ENCODE measurements at regions of chr5 and their contacts with region 1.

Region 1: GRCh38 chr5:42514754-42515153 is 91.5 kb downstream of the GHR start:
- DNase-seq: peak in 1 of 2 experiments; percentile 19
- H3K4me3 ChIP-seq: no peak overlapping the region
- H3K4me3 Mint-ChIP-seq: no peak overlapping the region
- H3K27ac Mint-ChIP-seq: no peak overlapping the region
- H3K4me1 ChIP-seq: peaks cover 20% of the 10 kb centered on the region; the same call in 1 of the 2 replicates
- H3K4me1 Mint-ChIP-seq: peaks cover 8% of the 10 kb centered on the region
- H3K27me3 ChIP-seq: no peaks in the 10 kb centered on the region
- H3K27me3 Mint-ChIP-seq: no peaks in the 10 kb centered on the region
- CTCF ChIP-seq: peak; percentile 16 to 33

Region 2: DNA sequence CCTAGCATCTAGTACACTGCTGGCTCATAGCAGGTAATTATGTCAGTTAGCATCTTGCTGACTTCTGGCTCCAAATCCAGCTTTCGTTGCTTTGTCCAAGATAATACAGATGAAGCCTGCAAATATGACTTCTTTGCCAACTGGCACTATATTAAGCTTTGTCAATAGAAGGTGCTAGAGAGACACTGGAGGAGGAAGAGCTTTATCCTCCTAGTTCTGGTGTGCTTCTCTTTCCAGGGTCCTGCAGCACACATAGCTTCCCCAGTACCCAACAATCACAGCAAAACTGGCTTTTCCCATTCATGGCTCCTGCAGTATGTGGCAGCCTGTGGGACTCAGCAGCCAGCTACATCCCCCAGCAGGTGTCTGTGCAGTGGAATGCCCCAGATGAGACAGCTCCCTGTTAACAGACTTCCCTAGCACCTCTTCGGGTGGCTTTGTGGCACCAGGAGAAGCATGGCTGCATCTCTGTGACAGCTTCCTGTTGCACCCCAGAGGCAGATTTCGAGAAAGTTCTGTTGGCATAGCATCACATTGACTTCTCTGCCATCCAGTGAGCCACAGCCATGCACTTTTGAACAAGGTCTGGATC is 792.3 kb before region 1 on chr5:
- CTCF ChIA-PET with region 1: no interaction called
- POLR2A ChIA-PET with region 1: no interaction called
- intact Hi-C with region 1: no loop called
- DNase-seq: no peak
- H3K4me3 ChIP-seq: no peak overlapping the region
- H3K4me3 Mint-ChIP-seq: no peak overlapping the region
- H3K27ac Mint-ChIP-seq: no peak overlapping the region
- H3K4me1 ChIP-seq: no peaks in the 10 kb centered on the region
- H3K4me1 Mint-ChIP-seq: no peaks in the 10 kb centered on the region
- H3K27me3 ChIP-seq: no peaks in the 10 kb centered on the region
- H3K27me3 Mint-ChIP-seq: no peaks in the 10 kb centered on the region
- CTCF ChIP-seq: no peak

Region 3: DNA sequence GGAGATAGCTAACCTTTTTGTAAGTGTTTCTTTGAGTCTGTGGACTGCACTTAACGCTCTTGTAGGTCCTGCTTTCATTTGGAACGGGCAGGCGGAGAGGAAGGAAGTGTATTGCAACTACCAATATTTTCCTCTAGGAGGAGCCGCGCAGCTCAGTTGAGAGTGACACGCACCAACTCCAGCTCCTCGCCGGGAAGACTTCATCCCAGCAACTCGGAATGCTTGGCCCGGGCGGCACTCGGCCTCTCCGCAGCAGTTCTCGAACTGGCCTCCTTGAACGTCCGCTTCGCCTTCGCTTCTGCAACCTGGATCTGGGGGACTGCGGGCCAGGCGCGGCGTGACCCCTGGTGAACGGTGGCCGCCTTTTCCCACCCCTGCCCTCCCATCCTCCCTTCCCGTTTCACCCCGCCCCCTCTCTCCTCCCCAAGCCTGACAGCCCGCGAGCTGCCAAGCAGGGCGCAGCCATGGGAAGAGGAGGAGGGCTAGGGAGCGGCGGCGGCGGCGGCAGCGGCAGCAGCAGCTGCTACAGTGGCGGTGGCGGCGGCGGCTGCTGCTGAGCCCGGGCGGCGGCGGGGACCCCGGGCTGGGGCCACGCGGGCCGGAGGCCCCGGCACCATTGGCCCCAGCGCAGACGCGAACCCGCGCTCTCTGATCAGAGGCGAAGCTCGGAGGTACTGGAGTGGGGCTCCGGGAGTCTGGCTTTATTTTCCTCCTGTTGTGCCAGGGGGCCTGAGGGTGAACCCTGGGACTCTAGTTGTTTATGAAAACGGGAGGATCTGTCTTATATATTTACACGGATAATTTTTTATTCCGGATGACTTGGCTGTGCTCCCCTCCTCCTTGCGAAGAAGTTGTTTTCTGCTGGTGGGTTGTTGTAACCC is 91.2 kb before region 1 on chr5 and contains the start of gene GHR:
- CTCF ChIA-PET with region 1: interaction called, 3 read pairs
- POLR2A ChIA-PET with region 1: no interaction called
- intact Hi-C with region 1: loop called (anchors 5 kb)
- DNase-seq: peak; percentile 83 to 84
- H3K4me3 ChIP-seq: peak within 1 kb of the TSS; percentile 63
- H3K4me3 Mint-ChIP-seq: no peak within 1 kb of the TSS
- H3K27ac Mint-ChIP-seq: no peak within 1 kb of the TSS
- H3K4me1 ChIP-seq: no peaks in the 10 kb centered on the region
- H3K4me1 Mint-ChIP-seq: no peaks in the 10 kb centered on the region
- H3K27me3 ChIP-seq: no peaks in the 10 kb centered on the region
- H3K27me3 Mint-ChIP-seq: no peaks in the 10 kb centered on the region
- CTCF ChIP-seq: peak; percentile 73 to 74
- total RNA-seq, gene GHR: 0.54 and 1.2 TPM in 2 replicates

Region 4: DNA sequence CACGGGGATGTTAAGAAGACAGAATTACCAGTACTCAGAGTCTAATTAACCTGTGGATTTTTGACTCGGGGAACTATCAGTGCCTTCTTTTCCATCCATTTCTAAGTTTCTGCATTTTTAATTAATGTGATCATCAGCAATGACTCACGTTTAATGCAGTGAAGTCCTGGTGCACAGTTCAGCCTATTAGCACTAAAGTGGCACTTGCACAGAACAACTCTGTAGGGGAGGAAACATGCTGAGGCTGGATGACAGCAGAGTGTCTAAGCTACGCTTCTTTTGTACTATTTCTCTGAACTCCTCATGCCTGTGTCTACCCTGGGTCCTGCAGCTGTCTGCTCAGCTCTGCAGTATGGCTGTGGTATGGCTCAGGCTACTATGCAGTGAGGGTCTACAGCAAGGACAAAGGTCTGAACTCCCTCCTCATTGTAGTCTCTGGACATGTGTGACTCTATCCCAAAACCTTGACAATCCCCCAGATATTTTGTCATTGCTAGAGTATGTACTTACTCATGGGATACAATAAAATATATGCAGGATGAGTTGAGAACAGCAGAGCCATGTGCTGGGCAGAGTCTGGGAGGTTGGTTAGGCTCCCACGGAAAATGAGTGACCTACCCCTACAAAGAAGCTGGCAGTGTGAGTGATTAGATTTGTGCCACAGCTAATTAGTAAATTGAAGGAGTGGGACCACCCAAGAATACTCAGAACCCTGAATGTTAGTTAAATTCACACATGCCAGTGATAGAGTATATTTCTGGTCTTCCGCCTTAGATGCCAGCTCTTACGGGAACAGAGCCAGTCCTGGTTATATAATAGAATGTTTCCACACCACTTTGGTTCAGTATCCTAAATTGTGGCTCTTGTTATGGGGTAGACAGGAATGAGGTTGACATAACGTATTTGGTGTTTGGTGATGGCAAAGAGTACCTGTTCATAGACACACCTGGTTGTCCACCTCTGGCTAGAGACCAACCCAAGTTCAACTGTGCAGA is 56.5 kb after region 1 on chr5:
- CTCF ChIA-PET with region 1: no interaction called
- POLR2A ChIA-PET with region 1: no interaction called
- intact Hi-C with region 1: loop called (anchors 5 kb)
- DNase-seq: no peak
- H3K4me3 ChIP-seq: no peak overlapping the region
- H3K4me3 Mint-ChIP-seq: no peak overlapping the region
- H3K27ac Mint-ChIP-seq: no peak overlapping the region
- H3K4me1 ChIP-seq: no peaks in the 10 kb centered on the region
- H3K4me1 Mint-ChIP-seq: no peaks in the 10 kb centered on the region
- H3K27me3 ChIP-seq: no peaks in the 10 kb centered on the region
- H3K27me3 Mint-ChIP-seq: no peaks in the 10 kb centered on the region
- CTCF ChIP-seq: no peak

Region 5: DNA sequence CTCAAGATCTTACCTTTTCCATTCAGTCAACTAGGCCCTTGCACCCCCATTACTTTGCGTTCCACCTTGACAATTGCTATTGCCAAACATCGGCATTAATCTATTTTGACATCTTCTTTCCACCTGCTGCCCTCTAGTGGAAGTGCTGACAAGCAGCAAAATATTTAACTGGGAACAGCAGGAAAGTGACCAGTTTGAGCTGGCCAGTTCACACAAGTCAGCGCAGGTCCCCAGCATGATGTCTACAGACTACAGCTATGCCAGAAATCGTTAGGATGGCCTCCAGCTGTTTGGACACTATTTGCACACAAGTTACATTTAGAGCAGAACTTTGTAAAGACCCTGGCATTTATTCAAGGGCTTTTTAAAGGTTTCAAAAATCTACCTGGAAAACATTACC is 68.6 kb after region 1 on chr5:
- CTCF ChIA-PET with region 1: interaction called, 8 read pairs
- POLR2A ChIA-PET with region 1: no interaction called
- intact Hi-C with region 1: loop called (anchors 1 kb)
- DNase-seq: peak; percentile 54 to 66
- H3K4me3 ChIP-seq: no peak overlapping the region
- H3K4me3 Mint-ChIP-seq: no peak overlapping the region
- H3K27ac Mint-ChIP-seq: no peak overlapping the region
- H3K4me1 ChIP-seq: no peaks in the 10 kb centered on the region
- H3K4me1 Mint-ChIP-seq: no peaks in the 10 kb centered on the region
- H3K27me3 ChIP-seq: no peaks in the 10 kb centered on the region
- H3K27me3 Mint-ChIP-seq: peaks cover 3% of the 10 kb centered on the region
- CTCF ChIP-seq: peak; percentile 69 to 72